Tibial artery (tissue), 4 donors: ENCODE measurements at regions of chr14 and their contacts with region 1.

Region 1: GRCh38 chr14:79464468-79464867 is 746.8 kb downstream of the DIO2 start:
- DNase-seq: no peak
- H3K4me3 ChIP-seq: no peak overlapping the region
- H3K27ac ChIP-seq: no peak overlapping the region
- H3K4me1 ChIP-seq: peaks cover 0 to 15% (median 0%) of the 10 kb centered on the region in 4 donors
- H3K27me3 ChIP-seq: no peaks in the 10 kb centered on the region
- CTCF ChIP-seq: no peak

Region 2: DNA sequence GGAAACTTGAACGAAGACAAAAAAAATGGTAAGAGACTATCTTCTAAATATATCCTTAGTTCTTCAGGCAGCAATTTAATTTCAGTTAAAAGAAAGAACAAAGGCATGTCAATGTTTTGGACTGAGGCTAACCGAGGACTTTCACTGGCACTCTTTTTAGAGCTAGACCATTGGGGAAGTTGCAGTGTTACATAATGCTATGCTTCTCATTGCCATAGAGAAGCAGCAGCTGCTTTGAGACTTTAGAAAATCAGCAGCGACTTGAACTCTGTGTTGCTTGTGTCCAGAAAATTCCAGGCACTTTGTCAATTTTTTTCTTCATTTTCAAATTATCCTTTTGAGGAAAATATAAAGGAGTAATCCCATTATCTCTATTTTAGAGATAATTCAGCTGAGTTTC is 330.1 kb before region 1 on chr14:
- intact Hi-C with region 1: no loop called
- DNase-seq: no peak
- H3K4me3 ChIP-seq: no peak overlapping the region
- H3K27ac ChIP-seq: no peak overlapping the region
- H3K4me1 ChIP-seq: no peaks in the 10 kb centered on the region
- H3K27me3 ChIP-seq: no peaks in the 10 kb centered on the region
- CTCF ChIP-seq: no peak

Region 3: GRCh38 chr14:81261176-81261575 is 1796.7 kb after region 1 on chr14:
- intact Hi-C with region 1: loop called (anchors 5 kb)
- DNase-seq: no peak
- H3K4me3 ChIP-seq: no peak overlapping the region
- H3K27ac ChIP-seq: no peak overlapping the region
- H3K4me1 ChIP-seq: no peaks in the 10 kb centered on the region
- H3K27me3 ChIP-seq: no peaks in the 10 kb centered on the region
- CTCF ChIP-seq: no peak